Ascending aorta (tissue), 2 donors: ENCODE measurements at regions of chr2 and their contacts with region 1.

Region 1: GRCh38 chr2:46377176-46377581 is 80.0 kb downstream of the EPAS1 start:
- DNase-seq: peak in 1 of 2 donors; percentile 79
- H3K4me3 ChIP-seq: no peak overlapping the region
- H3K27ac ChIP-seq: peak overlapping the region; percentile 43 to 71
- H3K4me1 ChIP-seq: peaks cover 0 to 20% of the 10 kb centered on the region in 2 donors
- H3K27me3 ChIP-seq: no peaks in the 10 kb centered on the region
- CTCF ChIP-seq: peak; percentile 15 to 51 (median 18)

Region 2: DNA sequence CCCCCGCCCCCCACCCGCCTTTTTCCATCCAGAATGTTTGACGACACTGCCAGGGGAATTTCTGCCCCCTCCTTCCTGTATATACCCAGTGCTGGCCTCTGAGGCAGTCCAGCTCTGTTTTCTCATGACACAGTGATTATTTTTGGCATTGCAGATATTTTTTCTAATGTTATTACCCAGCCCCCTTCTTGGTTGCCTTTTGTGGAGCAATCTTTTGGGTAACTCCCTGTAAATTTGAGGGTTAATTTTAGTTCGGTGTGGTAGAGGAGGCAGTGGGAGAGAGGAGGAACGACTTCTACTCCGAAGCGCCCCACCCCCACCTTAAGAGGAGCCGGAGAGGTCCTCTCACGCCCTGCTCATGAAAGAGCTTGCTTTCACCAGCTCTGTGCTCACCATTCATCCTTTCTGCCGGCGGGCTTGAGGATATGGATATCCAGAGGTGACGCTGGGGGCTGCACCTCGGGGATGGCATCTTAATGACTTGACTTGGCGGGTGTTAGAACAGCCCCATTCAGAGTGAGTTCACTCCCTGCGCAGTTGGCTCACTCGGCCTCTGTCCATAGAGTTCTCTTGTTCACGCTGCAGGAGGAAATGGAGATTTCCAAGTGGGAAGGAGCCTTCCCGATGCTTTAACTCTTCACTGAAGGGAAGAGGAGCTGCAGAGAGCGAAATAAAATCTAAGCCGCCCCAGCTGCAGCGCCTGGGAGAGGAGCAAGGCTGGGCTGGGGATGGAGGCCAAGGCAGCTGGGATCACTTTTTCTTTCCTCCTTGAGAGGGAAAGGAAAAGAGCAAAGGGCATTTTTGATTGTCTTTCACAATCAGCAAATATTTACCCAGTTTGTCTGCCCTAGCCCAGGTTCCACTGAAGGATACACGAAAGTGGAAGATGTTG is 41.5 kb before region 1 on chr2:
- intact Hi-C with region 1: loop called (anchors 5 kb)
- DNase-seq: peak in 1 of 2 donors; percentile 83
- H3K4me3 ChIP-seq: peak overlapping the region; percentile 42 to 55
- H3K27ac ChIP-seq: peak overlapping the region; percentile 86 to 92
- H3K4me1 ChIP-seq: peaks cover 18 to 82% of the 10 kb centered on the region in 2 donors
- H3K27me3 ChIP-seq: no peaks in the 10 kb centered on the region
- CTCF ChIP-seq: peak in 1 of 3 experiments; percentile 4

Region 3: GRCh38 chr2:46416739-46417403 is 39.7 kb after region 1 on chr2:
- intact Hi-C with region 1: no loop called
- DNase-seq: no peak
- H3K4me3 ChIP-seq: no peak overlapping the region
- H3K27ac ChIP-seq: no peak overlapping the region
- H3K4me1 ChIP-seq: no peaks in the 10 kb centered on the region
- H3K27me3 ChIP-seq: no peaks in the 10 kb centered on the region
- CTCF ChIP-seq: no peak